ENCODE measurements at regions of chr12 and their contacts with region 1.

Region 1: GRCh38 chr12:26113853-26114719 is 10.8 kb downstream of the BHLHE41 start:
- DNase-seq: no peak
- H3K4me3 ChIP-seq: peak overlapping the region; percentile 53
- CTCF ChIP-seq: peak; percentile 45

Region 2: DNA sequence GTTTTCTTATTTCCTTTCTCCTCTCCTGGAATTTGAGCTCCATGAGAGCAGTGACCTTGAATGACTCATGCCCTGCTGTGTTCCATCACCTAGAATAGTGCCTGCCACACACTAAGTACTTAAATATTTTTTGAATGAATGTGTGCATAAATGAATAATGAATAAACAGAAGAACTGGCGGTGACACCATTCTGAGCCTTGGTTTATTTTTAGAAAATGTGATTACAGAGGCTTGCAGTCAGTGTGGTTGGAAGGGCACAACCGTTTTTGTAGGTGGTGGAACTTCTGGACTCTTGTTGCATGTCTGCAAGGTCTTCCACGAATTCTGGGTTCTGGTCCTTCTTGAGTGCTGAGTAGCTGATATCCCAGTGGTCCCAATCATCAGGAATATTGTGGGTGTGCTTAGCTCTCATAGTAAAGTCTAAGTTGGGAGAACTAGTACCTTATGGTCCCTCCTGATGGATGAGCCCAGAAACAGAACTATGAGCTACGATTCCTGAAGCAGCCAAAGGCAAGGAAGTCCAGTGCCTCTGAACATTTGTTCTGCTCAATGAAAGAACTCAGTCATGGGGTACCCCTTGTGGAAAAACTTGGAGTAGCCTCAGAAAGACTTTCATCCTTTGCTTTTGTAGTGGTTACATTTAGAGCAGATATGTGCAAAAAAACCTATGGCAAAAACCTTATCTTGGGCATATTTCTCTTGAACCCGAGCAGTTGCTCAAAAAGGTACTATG is 39.5 kb after region 1 on chr12:
- in situ Hi-C with region 1: no loop called
- DNase-seq: peak; percentile 83
- H3K4me3 ChIP-seq: no peak overlapping the region
- CTCF ChIP-seq: peak; percentile 33

Region 3: GRCh38 chr12:26629864-26630263 is 515.8 kb after region 1 on chr12:
- in situ Hi-C with region 1: loop called (anchors 25 kb)
- DNase-seq: no peak
- H3K4me3 ChIP-seq: no peak overlapping the region
- CTCF ChIP-seq: peak; percentile 58